Activated CD4-positive, alpha-beta T cell treated with anti-CD3 and anti-CD28 coated beads for 36 hours (primary cell): ENCODE measurements at regions of chr1 and their contacts with region 1.

Region 1: DNA sequence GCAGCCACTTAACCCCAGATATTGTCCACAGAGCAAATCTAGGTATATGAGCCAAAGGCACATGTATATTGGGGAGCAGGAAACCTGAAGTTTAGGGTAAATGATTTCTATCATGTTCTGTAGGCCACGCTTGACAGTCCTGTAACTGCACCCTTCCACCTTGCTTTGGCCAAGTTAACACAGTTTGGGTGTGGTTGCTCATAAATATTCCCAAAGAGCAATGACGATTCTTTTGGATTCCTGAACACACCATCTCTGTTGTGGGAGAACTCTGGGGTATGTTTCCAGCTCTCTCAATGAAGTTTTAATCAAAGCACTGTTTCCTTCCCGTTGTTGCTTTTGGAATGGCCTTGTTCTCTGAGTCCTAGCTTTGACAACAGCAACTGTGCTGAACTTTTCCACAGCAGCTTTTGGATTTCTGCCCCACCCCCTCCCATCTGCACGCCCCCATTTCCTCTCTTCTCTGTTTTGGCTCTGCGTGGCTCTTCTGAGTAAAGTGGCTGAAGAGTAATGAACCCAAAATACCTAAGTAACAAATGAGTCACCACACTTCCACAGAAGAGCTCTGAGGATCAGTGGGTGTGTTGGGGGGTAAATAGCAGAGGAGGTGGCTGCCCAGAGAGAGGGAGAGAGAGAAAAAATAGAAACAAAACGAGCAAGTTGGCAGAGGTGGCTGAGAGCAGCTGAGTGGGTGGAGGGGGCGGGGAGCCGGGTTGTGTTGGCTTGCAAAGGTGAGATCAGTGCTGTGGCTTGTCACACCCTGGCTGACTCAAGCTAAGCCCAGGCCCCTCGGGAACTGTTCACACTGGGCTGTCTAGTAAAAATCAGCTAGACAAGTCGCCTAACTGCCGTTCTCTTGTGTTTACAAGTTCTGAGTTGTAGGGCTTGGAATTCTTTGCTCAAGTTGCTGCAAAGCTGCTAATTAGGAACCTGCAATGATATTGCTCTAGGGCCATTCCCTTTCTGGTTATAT is 26.9 kb upstream of the RAP1A start:
- DNase-seq: peak; percentile 98
- ATAC-seq: peak; percentile 93
- H3K4me3 Mint-ChIP-seq: peak overlapping the region; percentile 63
- H3K27ac Mint-ChIP-seq: peak overlapping the region; percentile 95
- H3K4me1 Mint-ChIP-seq: peaks cover 73% of the 10 kb centered on the region
- H3K27me3 Mint-ChIP-seq: no peaks in the 10 kb centered on the region

Region 2: DNA sequence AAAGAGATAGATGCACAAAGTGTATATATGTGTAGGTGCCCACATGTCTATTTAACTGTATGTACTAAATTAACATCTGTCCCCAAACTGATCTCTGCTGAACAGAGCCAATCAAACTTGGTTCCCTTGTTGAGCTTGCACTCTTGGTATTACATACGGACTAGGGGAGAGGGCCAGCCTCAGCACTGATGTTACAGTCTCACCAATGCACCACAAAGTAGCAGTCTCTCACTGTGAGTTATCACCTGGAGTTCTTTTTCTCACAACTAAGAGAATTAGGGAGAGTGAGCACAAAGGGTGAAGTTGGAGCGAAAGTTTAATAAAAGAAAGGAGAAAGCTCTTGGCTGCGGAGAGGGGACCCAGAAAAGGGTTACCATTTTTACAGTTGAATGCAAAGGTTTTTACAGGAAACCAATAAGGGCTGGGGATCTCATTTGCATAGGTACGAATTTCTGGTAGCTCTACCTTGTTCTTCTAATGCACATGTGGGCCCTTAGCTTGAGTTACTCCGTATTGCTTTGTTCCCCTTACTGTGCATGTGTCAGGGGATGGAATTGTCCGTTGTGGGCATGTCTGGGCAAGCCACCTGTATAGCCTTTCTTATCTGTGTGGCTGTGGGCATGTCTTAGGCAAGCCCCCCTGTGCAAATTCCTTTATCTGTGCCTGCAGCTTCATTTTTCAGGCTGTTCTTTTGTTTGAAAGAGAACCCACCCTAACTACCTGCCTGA is 378.4 kb before region 1 on chr1:
- CTCF ChIA-PET with region 1: no interaction called
- POLR2A ChIA-PET with region 1: interaction called, 3 read pairs
- intact Hi-C with region 1: loop called in 1 of 2 experiments (anchors 2 kb)
- DNase-seq: no peak
- ATAC-seq: peak; percentile 18
- H3K4me3 Mint-ChIP-seq: peak overlapping the region; percentile 68
- H3K27ac Mint-ChIP-seq: peak overlapping the region; percentile 97
- H3K4me1 Mint-ChIP-seq: peaks cover 80% of the 10 kb centered on the region
- H3K27me3 Mint-ChIP-seq: no peaks in the 10 kb centered on the region

Region 3: DNA sequence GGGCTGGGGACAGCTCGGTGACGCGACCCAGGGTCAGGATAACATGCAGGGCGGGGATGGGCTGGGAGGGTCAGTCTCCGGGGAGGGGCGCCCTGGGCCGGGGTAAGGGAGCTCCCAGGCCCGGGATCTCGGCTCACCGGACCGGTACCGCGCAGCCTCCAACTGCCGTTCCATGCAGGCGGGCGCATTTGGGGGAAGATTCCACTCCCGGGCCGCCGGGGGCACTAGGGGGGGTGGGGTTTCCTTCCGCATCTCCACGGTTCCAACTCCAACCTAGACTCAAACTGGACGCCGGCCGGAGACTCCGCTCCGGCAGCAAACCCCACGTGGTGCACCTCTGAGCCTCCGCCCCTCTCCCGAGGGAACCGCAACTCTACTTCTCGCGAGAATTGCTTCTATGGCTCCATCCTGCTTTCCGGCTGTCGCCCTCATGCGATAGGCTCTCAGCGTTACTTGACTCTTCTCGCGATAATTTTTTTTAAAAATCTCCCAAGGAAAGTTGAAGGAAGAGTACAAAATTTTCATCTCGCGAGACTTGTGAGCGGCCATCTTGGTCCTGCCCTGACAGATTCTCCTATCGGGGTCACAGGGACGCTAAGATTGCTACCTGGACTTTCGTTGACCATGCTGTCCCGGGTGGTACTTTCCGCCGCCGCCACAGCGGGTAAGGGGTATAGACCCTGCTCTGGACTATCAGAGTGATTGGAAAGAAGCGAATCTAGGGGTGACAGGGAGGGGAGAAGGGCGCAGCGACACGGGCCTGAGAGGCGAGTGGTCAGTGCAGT is 143.6 kb before region 1 on chr1 and contains the starts of genes ATP5PB and WDR77:
- CTCF ChIA-PET with region 1: no interaction called
- POLR2A ChIA-PET with region 1: no interaction called
- intact Hi-C with region 1: no loop called
- DNase-seq: peak; percentile 94
- ATAC-seq: peak; percentile 98
- H3K4me3 Mint-ChIP-seq: peak within 1 kb of the TSS; percentile 99
- H3K27ac Mint-ChIP-seq: peak within 1 kb of the TSS; percentile 98
- H3K4me1 Mint-ChIP-seq: peaks cover 79% of the 10 kb centered on the region
- H3K27me3 Mint-ChIP-seq: no peaks in the 10 kb centered on the region
- total RNA-seq, gene ATP5PB: 292 to 301 TPM
- total RNA-seq, gene WDR77: 42.5 to 53.6 TPM

Region 4: GRCh38 chr1:111516005-111516535 is 76.6 kb before region 1 on chr1:
- CTCF ChIA-PET with region 1: interaction called, 7 read pairs
- POLR2A ChIA-PET with region 1: interaction called, 6 read pairs
- intact Hi-C with region 1: loop called (anchors 2 kb)
- DNase-seq: peak; percentile 62
- ATAC-seq: peak; percentile 49
- H3K4me3 Mint-ChIP-seq: peak overlapping the region; percentile 47
- H3K27ac Mint-ChIP-seq: peak overlapping the region; percentile 85
- H3K4me1 Mint-ChIP-seq: peaks cover 45% of the 10 kb centered on the region
- H3K27me3 Mint-ChIP-seq: no peaks in the 10 kb centered on the region

Region 5: GRCh38 chr1:111619635-111620440 is 27.2 kb after region 1 on chr1 and contains the start of gene RAP1A:
- CTCF ChIA-PET with region 1: interaction called, 13 read pairs
- POLR2A ChIA-PET with region 1: interaction called, 11 read pairs
- intact Hi-C with region 1: loop called (anchors 1 kb)
- DNase-seq: peak; percentile 98
- ATAC-seq: peak; percentile 71
- H3K4me3 Mint-ChIP-seq: peak within 1 kb of the TSS; percentile 96
- H3K27ac Mint-ChIP-seq: peak within 1 kb of the TSS; percentile 97
- H3K4me1 Mint-ChIP-seq: peaks cover 72% of the 10 kb centered on the region
- H3K27me3 Mint-ChIP-seq: no peaks in the 10 kb centered on the region
- total RNA-seq, gene RAP1A: 182 to 214 TPM

Region 6: DNA sequence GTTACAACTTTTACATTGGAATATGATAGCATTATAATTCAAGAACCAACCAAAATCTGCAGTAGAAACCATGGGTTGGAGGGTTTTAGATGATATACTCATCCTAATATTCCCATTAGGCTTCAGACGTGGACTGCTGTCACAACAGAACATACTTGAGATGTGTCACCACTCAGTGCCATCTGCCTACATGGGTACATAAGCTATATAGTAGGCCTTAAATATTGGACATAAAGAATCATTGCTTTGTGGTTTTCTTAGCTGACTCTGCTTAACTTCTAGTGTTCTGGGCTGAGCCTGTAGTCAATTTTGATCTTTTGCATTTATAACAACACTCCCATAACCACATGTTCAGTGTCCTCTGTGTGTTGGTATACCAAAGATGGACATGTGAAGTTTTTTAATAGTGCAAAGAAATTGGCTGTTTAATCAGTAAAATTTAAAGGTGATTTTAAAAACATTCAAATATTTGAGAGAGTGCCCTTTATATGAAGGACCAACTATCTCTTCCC is 41.1 kb after region 1 on chr1:
- CTCF ChIA-PET with region 1: interaction called, 9 read pairs
- POLR2A ChIA-PET with region 1: no interaction called
- intact Hi-C with region 1: loop called (anchors 1 to 2 kb)
- DNase-seq: no peak
- ATAC-seq: no peak
- H3K4me3 Mint-ChIP-seq: no peak overlapping the region
- H3K27ac Mint-ChIP-seq: no peak overlapping the region
- H3K4me1 Mint-ChIP-seq: peaks cover 84% of the 10 kb centered on the region
- H3K27me3 Mint-ChIP-seq: no peaks in the 10 kb centered on the region

Region 7: GRCh38 chr1:112074711-112075110 is 482.0 kb after region 1 on chr1:
- CTCF ChIA-PET with region 1: no interaction called
- POLR2A ChIA-PET with region 1: no interaction called
- intact Hi-C with region 1: no loop called
- DNase-seq: no peak
- ATAC-seq: no peak
- H3K4me3 Mint-ChIP-seq: no peak overlapping the region
- H3K27ac Mint-ChIP-seq: no peak overlapping the region
- H3K4me1 Mint-ChIP-seq: no peaks in the 10 kb centered on the region
- H3K27me3 Mint-ChIP-seq: peaks cover 15% of the 10 kb centered on the region